ENCODE measurements at regions of chr20 and their contacts with region 1.

Region 1: DNA sequence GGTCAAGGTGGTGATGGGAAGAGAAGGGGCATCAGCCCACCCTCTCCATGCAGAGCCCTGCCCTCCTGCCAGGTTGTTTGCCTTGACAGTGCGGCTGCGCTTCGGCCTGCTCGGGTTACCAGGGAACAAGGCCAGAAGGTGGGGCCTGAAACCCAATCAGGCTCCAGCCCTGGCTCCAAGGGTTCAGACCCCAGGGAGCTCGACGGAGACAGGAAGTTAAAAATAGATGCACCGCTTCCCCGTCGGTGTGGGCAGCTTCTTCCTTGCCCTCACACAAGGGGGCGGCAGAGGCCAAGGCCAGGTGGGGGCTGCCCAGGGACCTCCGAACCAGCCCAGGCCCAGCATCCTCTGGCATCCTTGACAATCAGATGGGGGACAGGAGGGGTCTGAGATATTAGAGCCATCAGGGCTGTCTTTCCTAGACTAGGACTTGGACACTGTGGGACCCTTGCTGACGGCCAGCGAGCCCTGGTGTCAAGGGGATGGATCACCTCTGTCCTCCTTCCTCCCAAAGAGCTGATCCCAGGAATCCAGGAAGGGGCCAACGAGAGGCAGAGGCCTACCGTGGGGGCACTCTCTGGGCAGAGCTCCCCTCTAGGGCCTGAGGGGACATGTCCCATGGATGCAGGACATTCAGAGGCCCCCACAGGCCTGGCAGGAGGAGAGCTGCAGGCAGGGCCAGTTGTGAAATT is 65.2 kb downstream of the RIPOR3 start:
- DNase-seq: no peak
- H3K4me3 ChIP-seq: no peak overlapping the region
- H3K27ac ChIP-seq: no peak overlapping the region
- H3K4me1 ChIP-seq: no peaks in the 10 kb centered on the region
- H3K27me3 ChIP-seq: no peaks in the 10 kb centered on the region
- CTCF ChIP-seq: peak in 3 of 4 experiments; percentile 24 to 54 (median 40)
- POLR2A ChIP-seq: no peak

Region 2: DNA sequence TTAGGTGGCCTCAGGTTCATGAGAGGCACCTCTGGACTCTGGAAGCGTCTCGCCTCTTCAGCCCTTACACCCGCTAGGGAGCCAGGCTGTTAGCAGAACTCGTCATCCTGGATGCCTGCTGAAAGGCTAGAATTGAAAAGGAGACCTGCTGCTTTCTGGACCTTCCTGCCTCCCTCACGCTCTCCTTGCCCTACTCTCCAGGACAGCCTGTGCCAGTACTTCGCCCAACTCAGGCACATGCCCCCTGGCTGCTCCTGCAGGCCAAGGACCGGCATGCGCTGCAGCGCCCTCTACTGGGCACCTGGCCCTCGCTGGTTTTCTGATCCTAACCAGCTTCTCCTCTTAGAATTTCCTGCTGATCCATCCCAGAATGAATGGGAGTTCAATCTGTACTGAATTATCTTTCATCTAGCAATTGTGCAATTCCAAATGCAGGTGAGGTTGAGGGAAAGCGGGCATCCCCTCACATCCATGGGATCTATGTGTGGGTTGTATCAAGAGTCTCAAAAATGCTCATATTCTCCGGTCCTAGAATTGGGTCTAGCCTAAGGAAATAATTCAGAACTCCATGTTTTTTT is 38.0 kb before region 1 on chr20:
- intact Hi-C with region 1: no loop called
- DNase-seq: peak; percentile 61
- H3K4me3 ChIP-seq: no peak overlapping the region
- H3K27ac ChIP-seq: peak overlapping the region in 1 of 2 donors; percentile 7
- H3K4me1 ChIP-seq: peaks cover 14% of the 10 kb centered on the region
- H3K27me3 ChIP-seq: no peaks in the 10 kb centered on the region
- CTCF ChIP-seq: peak; percentile 68 to 89 (median 81)
- POLR2A ChIP-seq: no peak

Region 3: GRCh38 chr20:50713657-50714101 is 87.5 kb after region 1 on chr20:
- intact Hi-C with region 1: loop called (anchors 5 kb)
- DNase-seq: no peak
- H3K4me3 ChIP-seq: no peak overlapping the region
- H3K27ac ChIP-seq: no peak overlapping the region
- H3K4me1 ChIP-seq: no peaks in the 10 kb centered on the region
- H3K27me3 ChIP-seq: no peaks in the 10 kb centered on the region
- CTCF ChIP-seq: peak in 1 of 4 experiments; percentile 24
- POLR2A ChIP-seq: no peak